Endothelial cell of umbilical vein (primary cell): ENCODE measurements at regions of chr5 and their contacts with region 1.

Region 1: DNA sequence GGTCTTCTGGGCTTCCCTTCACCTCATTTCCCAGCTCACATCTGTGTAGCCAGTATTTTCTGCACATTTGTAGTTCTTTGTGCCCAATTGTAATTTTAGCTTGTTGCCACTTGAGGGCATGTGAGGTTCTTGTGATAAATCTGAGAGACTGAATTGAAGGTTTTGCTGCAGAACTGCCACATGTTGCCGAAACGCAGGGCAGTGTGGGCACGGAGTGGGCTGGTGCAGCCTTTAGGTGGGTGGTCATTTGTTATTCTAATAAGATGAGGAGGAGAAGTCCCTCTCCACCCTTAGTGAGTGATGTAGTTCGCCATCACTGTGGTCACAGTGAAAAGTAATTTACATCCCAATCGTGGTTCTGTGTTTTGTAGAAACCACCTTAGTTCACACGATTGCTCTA is 21.2 kb downstream of the OTULIN start:
- DNase-seq: peak; percentile 59
- H3K4me3 ChIP-seq: no peak overlapping the region
- H3K27ac ChIP-seq: no peak overlapping the region
- H3K4me1 ChIP-seq: no peaks in the 10 kb centered on the region
- H3K27me3 ChIP-seq: no peaks in the 10 kb centered on the region
- CTCF ChIP-seq: peak; percentile 53 to 56
- POLR2A ChIP-seq: no peak

Region 2: DNA sequence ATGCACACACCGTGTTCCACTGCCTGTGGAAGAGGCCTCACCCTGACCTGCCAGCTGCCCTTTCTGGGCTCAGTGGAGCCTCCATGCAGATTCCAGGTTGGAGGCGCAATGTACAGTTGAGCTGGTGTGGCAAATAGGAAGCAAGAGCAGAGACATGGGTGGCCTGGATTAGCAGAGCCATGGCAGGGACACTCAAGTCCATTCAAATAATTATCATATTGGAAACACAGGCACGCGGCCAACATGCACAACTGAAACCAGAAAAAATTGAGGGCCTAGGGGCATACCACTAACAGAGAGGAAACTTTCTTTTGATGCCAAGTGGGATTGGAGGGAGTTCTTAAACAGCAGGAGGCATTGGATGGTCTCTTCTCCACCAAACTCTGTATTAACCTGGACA is 68.3 kb before region 1 on chr5:
- CTCF ChIA-PET with region 1: no interaction called
- POLR2A ChIA-PET with region 1: no interaction called
- dilution Hi-C with region 1: no loop called
- intact Hi-C with region 1: no loop called
- DNase-seq: no peak
- H3K4me3 ChIP-seq: no peak overlapping the region
- H3K27ac ChIP-seq: no peak overlapping the region
- H3K4me1 ChIP-seq: no peaks in the 10 kb centered on the region
- H3K27me3 ChIP-seq: peaks cover 8 to 12% of the 10 kb centered on the region in 2 experiments
- CTCF ChIP-seq: no peak
- POLR2A ChIP-seq: no peak

Region 3: GRCh38 chr5:14665949-14666348 is 19.8 kb before region 1 on chr5:
- CTCF ChIA-PET with region 1: interaction called, 38 read pairs
- POLR2A ChIA-PET with region 1: no interaction called
- dilution Hi-C with region 1: no loop called
- intact Hi-C with region 1: no loop called
- DNase-seq: peak; percentile 15
- H3K4me3 ChIP-seq: peak overlapping the region in 1 of 3 experiments; percentile 71
- H3K27ac ChIP-seq: no peak overlapping the region
- H3K4me1 ChIP-seq: peaks cover 23% of the 10 kb centered on the region
- H3K27me3 ChIP-seq: no peaks in the 10 kb centered on the region
- CTCF ChIP-seq: peak in 1 of 2 donors; percentile 7
- POLR2A ChIP-seq: no peak

Region 4: DNA sequence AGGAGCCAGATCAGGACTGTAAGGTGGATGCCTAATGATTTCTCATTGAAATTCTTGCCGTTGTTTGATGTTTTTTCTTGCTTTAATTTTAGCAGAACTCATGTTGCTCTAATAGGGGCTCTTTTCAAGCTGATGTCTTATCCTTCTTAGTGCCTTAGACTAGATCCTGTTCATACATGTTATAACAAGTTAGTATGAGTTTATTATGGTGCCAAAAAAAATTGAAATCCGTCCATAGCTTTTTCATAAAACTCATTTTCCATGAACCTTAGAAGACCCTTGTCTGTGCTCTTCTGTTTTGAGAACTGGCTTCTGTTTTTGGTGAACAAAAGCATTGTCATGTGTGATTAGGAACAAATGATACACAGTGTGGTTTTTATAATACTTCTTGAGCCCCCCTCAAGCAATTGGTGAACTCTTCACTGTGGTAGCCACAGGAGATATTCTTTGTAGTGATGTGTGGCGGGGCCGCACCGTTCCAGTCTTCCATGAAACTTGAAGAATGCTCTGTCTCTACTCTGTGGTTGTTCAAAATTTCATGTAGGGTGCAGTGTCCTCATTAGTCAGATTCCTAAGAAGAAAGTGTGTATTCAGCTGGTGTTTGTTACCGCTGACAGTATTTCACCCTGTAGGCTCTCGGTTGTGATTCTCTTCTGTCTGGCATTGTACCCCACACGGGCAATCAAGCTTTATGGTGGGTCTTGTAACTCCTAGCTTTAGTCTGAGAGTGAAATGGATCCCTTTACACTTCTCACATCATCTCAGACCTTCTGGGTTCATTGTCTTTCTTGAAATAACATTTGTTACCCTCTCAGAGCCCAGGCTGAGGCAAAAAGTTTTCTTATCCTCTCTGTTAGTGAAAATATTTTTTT is 10.5 kb before region 1 on chr5:
- CTCF ChIA-PET with region 1: interaction called, 38 read pairs
- POLR2A ChIA-PET with region 1: no interaction called
- dilution Hi-C with region 1: no loop called
- intact Hi-C with region 1: no loop called
- DNase-seq: no peak
- H3K4me3 ChIP-seq: no peak overlapping the region
- H3K27ac ChIP-seq: no peak overlapping the region
- H3K4me1 ChIP-seq: peaks cover 9% of the 10 kb centered on the region
- H3K27me3 ChIP-seq: no peaks in the 10 kb centered on the region
- CTCF ChIP-seq: no peak
- POLR2A ChIP-seq: no peak

Region 5: GRCh38 chr5:14696057-14696456 is 10.3 kb after region 1 on chr5:
- CTCF ChIA-PET with region 1: interaction called, 22 read pairs
- POLR2A ChIA-PET with region 1: no interaction called
- dilution Hi-C with region 1: no loop called
- intact Hi-C with region 1: no loop called
- DNase-seq: no peak
- H3K4me3 ChIP-seq: no peak overlapping the region
- H3K27ac ChIP-seq: no peak overlapping the region
- H3K4me1 ChIP-seq: no peaks in the 10 kb centered on the region
- H3K27me3 ChIP-seq: no peaks in the 10 kb centered on the region
- CTCF ChIP-seq: no peak
- POLR2A ChIP-seq: no peak

Region 6: DNA sequence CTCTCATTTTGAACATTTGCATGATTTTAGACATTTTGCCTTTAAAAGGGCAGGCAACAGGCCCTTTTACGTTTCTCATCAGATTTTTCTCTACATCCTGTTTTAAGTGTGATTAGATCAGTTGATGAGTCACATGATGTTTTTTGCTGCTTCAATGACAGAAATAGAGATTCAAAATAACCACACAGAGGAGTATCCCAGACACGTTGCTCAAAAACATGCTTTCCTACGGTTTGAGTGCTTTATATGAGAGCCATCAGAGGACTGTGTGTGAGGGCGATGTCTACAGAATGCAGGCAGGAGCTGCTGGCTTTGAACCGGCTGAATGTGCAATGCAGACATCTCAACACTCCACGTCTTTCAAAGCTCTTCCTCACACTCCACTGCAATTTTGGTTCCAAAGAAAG is 20.9 kb after region 1 on chr5:
- CTCF ChIA-PET with region 1: interaction called, 23 read pairs
- POLR2A ChIA-PET with region 1: no interaction called
- dilution Hi-C with region 1: no loop called
- intact Hi-C with region 1: no loop called
- DNase-seq: peak; percentile 66
- H3K4me3 ChIP-seq: no peak overlapping the region
- H3K27ac ChIP-seq: no peak overlapping the region
- H3K4me1 ChIP-seq: peaks cover 13% of the 10 kb centered on the region
- H3K27me3 ChIP-seq: no peaks in the 10 kb centered on the region
- CTCF ChIP-seq: no peak
- POLR2A ChIP-seq: no peak

Region 7: DNA sequence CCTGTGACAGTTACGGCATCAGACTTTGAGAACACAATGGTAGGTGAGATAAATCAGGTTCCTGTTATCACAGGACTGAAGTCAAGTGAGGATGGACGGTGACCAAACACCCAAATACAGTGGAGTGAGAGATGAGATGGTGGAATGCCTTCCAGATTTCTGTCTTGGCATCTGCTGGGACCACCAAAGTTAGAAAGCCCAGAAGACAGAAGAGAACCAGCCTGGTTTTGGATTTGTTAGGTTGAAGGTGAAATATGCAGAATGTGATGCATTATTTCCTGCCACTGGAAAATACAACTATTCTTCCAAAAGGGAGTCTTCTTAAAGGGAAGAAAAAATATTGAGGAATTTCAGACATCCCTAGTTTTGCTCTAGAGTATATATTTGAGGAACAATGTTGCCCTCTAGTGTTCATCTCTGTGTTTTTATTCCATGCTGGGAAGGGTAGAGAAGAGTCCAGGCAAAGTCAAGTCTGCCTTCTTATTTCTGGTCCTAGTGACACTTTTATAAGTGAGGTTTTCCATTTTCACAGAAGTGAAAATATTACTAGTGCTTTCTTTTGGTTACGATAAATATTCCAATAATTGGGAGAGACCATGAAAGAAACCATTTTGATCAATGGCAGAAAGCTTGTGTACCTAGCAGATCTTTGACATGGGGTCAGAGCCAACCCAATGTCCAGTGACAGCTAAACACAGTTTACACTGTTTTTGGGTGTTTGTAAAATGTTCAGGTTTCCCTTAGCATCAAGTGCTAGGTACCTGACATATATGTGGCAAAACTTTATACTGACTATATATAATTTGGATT is 328.1 kb after region 1 on chr5:
- CTCF ChIA-PET with region 1: interaction called, 84 read pairs
- POLR2A ChIA-PET with region 1: no interaction called
- dilution Hi-C with region 1: no loop called
- intact Hi-C with region 1: loop called (anchors 1 kb)
- DNase-seq: peak; percentile 74
- H3K4me3 ChIP-seq: no peak overlapping the region
- H3K27ac ChIP-seq: no peak overlapping the region
- H3K4me1 ChIP-seq: peaks cover 11% of the 10 kb centered on the region
- H3K27me3 ChIP-seq: peaks cover 0 to 5% of the 10 kb centered on the region in 2 experiments
- CTCF ChIP-seq: peak; percentile 38 to 39
- POLR2A ChIP-seq: no peak